ENCODE measurements at regions of chr5 and their contacts with region 1.

Region 1: DNA sequence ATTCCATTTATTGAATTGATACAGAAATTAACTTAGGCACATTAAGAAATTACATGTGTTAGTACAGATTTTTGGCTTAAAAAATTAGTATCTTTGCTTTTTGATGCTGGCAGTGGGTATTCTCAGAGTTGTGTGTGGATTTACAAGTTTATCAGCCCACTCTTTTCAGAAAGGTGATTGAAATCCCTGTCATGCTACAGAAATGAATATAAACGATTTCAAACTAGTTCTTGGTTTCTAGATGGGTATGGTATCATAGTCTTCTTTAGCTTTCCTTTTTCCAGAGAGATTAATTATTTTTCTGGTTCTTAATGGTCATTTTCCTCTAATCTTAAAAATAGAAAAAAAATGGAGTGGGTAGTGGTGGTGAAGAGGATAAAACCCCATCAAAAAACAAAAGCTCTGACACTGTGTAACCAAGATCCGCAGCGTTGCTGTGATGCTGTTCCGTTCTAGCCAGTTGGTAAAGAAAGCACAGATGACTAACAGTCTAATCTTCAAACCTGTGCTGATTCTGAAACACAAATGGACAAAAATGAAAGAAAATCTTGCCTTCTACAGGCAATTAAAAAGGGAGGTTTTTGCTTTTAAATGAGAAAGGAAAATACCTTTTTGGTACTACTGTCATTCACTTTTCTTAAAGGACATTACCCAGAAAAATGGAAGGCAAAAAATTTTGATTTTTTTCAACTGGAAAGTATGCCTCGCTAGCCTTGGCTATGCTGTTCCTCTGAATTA is 5.2 kb downstream of the LRRTM2 start:
- DNase-seq: no peak
- H3K4me3 Mint-ChIP-seq: no peak overlapping the region
- H3K27ac Mint-ChIP-seq: no peak overlapping the region
- H3K4me1 Mint-ChIP-seq: peaks cover 9% of the 10 kb centered on the region
- H3K27me3 Mint-ChIP-seq: peaks cover 29% of the 10 kb centered on the region

Region 2: GRCh38 chr5:138849426-138849825 is 20.5 kb before region 1 on chr5:
- intact Hi-C with region 1: loop called (anchors 1 kb)
- DNase-seq: no peak
- H3K4me3 Mint-ChIP-seq: no peak overlapping the region
- H3K27ac Mint-ChIP-seq: no peak overlapping the region
- H3K4me1 Mint-ChIP-seq: peaks cover 20% of the 10 kb centered on the region
- H3K27me3 Mint-ChIP-seq: no peaks in the 10 kb centered on the region

Region 3: GRCh38 chr5:138945421-138946240 is 75.7 kb after region 1 on chr5:
- intact Hi-C with region 1: no loop called
- DNase-seq: no peak
- H3K4me3 Mint-ChIP-seq: no peak overlapping the region
- H3K27ac Mint-ChIP-seq: no peak overlapping the region
- H3K4me1 Mint-ChIP-seq: peaks cover 7% of the 10 kb centered on the region
- H3K27me3 Mint-ChIP-seq: no peaks in the 10 kb centered on the region

Region 4: DNA sequence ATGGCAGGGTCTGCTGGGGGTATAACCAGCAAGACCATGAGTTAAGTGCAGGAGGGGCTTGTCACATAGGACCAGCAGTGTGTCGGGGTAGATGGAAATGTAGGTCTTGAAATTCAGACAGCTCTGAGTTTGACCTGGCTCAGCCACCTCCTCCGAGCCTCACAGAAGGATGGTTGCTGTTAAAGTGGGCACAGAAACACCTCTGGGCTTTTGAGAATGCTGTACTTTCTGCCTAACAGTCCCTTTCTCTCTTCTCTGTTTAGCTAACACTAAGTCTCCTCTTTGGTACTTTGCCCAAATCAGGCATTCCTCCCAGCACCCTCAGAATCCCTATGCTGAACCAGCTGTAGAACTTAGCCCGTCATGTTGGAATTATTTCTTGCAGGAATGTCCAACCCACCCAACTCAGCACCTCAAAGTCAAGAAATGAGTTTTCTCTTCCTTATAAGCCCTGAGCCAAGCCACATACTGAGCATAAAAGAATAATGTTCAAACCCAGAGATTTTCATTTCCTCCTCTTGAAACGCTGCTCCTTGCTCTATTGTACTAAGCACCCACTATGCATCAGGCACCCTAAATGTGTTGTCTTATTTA is 381.9 kb after region 1 on chr5:
- intact Hi-C with region 1: loop called (anchors 1 kb)
- DNase-seq: no peak
- H3K4me3 Mint-ChIP-seq: no peak overlapping the region
- H3K27ac Mint-ChIP-seq: no peak overlapping the region
- H3K4me1 Mint-ChIP-seq: peaks cover 24% of the 10 kb centered on the region
- H3K27me3 Mint-ChIP-seq: no peaks in the 10 kb centered on the region

Region 5: GRCh38 chr5:139458580-139459406 is 588.9 kb after region 1 on chr5:
- intact Hi-C with region 1: no loop called
- DNase-seq: peak; percentile 80
- H3K4me3 Mint-ChIP-seq: peak overlapping the region; percentile 81
- H3K27ac Mint-ChIP-seq: peak overlapping the region; percentile 99
- H3K4me1 Mint-ChIP-seq: peaks cover 72% of the 10 kb centered on the region
- H3K27me3 Mint-ChIP-seq: no peaks in the 10 kb centered on the region